Heart right ventricle (tissue), 16 donors: ENCODE measurements at regions of chr6 and their contacts with region 1.

Region 1: GRCh38 chr6:46637145-46637544 is 15.5 kb downstream of the CYP39A1 start:
- DNase-seq: no peak
- ATAC-seq: peak in 1 of 8 donors; percentile 27
- H3K4me3 ChIP-seq: no peak overlapping the region
- H3K27ac ChIP-seq: no peak overlapping the region
- H3K4me1 ChIP-seq: peaks cover 0 to 6% (median 0%) of the 10 kb centered on the region in 9 donors
- H3K27me3 ChIP-seq: no peaks in the 10 kb centered on the region
- CTCF ChIP-seq: no peak

Region 2: DNA sequence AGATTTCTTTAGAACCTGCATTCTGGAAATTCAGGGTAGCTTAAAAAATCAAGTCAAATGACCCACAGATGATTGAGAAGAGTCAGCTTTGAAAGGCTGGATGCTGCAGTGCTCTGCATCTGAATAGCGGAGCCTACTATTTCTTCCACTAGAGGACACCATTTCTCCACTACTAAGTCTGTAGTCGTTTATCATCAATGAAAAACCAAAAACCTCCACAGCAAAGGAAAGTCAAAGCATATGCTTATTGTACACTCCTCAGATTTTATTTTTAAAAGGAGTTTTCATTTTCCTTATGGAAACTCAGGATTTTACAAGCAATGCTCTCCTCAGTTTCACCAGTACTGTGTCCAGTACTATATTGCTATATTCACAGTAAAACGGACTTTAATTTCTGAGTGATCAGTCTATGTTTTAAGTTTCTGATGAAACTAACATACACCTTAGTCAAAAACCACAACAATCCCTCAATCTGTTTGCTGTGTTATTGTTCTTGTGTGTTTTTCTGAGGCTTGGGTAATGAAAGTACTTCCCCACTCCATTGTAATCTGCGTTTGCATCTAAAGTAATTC is 415.8 kb before region 1 on chr6:
- intact Hi-C with region 1: loop called in 2 of 10 experiments (anchors 10 kb)
- DNase-seq: no peak
- ATAC-seq: peak in 7 of 8 donors; percentile 60 to 81 (median 70)
- H3K4me3 ChIP-seq: no peak overlapping the region
- H3K27ac ChIP-seq: no peak overlapping the region
- H3K4me1 ChIP-seq: peaks cover 0 to 39% (median 11%) of the 10 kb centered on the region in 9 donors
- H3K27me3 ChIP-seq: no peaks in the 10 kb centered on the region
- CTCF ChIP-seq: peak; percentile 60 to 91 (median 83)

Region 3: GRCh38 chr6:46684771-46685170 is 47.6 kb after region 1 on chr6:
- intact Hi-C with region 1: no loop called
- DNase-seq: no peak
- ATAC-seq: no peak
- H3K4me3 ChIP-seq: no peak overlapping the region
- H3K27ac ChIP-seq: no peak overlapping the region
- H3K4me1 ChIP-seq: no peaks in the 10 kb centered on the region
- H3K27me3 ChIP-seq: no peaks in the 10 kb centered on the region
- CTCF ChIP-seq: no peak